Right cardiac atrium (tissue), 5 donors: ENCODE measurements at regions of chr10 and their contacts with region 1.

Region 1: GRCh38 chr10:73644015-73644743 is 2.9 kb upstream of the MYOZ1 start:
- DNase-seq: peak in 2 of 3 donors; percentile 37 to 76
- ATAC-seq: peak; percentile 10 to 42
- H3K4me3 ChIP-seq: no peak overlapping the region
- H3K27ac ChIP-seq: peak overlapping the region; percentile 70
- H3K4me1 ChIP-seq: peaks cover 7% of the 10 kb centered on the region
- H3K27me3 ChIP-seq: no peaks in the 10 kb centered on the region

Region 2: DNA sequence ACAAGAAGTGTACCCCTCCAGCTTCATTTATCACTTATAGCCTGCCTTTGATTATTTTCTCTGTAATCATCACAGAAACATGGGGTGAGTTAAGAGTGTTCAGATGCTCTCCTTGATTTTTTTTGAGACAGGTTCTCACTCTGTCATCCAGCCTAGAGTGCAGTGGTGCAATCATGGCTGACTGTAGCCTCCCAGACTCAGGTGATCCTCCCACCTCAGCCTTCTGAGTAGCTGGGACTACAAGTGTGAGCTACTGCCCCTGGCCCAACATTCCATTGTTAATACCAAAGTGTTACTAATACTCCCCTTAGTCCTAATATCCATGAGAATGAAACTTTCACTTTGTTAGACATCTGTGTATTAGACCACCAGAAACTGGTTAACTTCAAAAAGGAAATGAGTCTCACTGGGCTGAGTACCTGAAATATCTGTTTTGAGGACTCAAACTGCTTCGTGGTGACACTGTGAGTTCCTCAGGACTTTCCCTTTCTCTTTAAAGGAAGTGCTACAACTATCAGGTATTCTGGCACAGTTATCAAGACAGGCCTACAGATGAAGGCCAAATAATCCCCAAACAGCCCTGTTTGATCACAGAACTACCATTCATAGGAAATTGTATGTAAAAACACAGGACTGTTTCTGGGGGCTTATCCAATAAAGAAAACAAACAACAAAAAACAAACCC is 265.0 kb before region 1 on chr10:
- intact Hi-C with region 1: no loop called
- DNase-seq: no peak
- ATAC-seq: no peak
- H3K4me3 ChIP-seq: no peak overlapping the region
- H3K27ac ChIP-seq: no peak overlapping the region
- H3K4me1 ChIP-seq: no peaks in the 10 kb centered on the region
- H3K27me3 ChIP-seq: no peaks in the 10 kb centered on the region

Region 3: GRCh38 chr10:73529089-73529832 is 114.9 kb before region 1 on chr10:
- intact Hi-C with region 1: loop called (anchors 2 kb)
- DNase-seq: peak in 1 of 3 donors; percentile 18
- ATAC-seq: peak; percentile 81 to 87
- H3K4me3 ChIP-seq: no peak overlapping the region
- H3K27ac ChIP-seq: no peak overlapping the region
- H3K4me1 ChIP-seq: no peaks in the 10 kb centered on the region
- H3K27me3 ChIP-seq: no peaks in the 10 kb centered on the region

Region 4: GRCh38 chr10:73837072-73837471 is 192.9 kb after region 1 on chr10:
- intact Hi-C with region 1: no loop called
- DNase-seq: peak in 1 of 3 donors; percentile 15
- ATAC-seq: peak; percentile 44 to 84
- H3K4me3 ChIP-seq: no peak overlapping the region
- H3K27ac ChIP-seq: no peak overlapping the region
- H3K4me1 ChIP-seq: no peaks in the 10 kb centered on the region
- H3K27me3 ChIP-seq: no peaks in the 10 kb centered on the region